ENCODE measurements at regions of chr1 and their contacts with region 1.

Region 1: DNA sequence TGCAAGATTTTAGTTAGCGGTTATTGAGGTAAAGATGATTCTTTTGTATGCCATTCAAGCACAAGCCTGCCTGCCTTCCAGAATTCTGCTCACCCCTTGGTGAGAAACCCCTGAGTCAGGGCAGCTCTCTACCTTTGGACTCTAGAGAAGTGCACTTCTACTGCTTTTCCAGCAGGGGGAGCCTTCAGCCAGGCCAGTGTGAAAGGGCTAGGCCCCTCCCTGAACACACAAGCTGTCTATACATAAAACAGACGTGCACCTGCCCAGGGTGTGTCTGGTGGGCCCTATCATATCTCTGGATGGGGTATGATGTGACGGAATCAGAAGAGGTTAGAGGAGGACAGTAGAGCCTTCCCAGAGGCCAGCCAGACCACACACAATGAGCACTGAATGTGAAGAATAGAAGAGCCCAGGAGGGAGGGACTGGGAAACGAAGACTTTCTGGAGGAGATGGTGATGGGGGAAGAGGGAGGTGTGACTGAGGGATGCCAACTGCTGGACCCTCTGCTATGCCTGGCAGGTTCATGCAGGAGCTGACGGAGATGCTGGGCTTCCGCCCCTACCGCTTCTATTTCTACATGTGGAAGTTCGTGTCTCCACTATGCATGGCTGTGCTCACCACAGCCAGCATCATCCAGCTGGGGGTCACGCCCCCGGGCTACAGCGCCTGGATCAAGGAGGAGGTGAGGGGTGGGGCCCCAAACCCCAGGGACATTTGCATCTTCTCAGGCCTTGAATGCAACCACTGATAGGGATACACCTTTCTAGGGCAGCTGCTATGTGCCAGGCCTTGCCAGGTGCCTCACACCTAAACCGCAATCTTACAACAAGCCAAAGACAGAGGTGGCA is 13.0 kb upstream of the KCNC4 start:
- DNase-seq: peak; percentile 28 to 47 (median 38)
- ATAC-seq: peak; percentile 81
- H3K4me3 ChIP-seq: no peak overlapping the region
- H3K27ac ChIP-seq: no peak overlapping the region
- H3K4me1 ChIP-seq: no peaks in the 10 kb centered on the region
- H3K27me3 ChIP-seq: no peaks in the 10 kb centered on the region
- CTCF ChIP-seq: peak; percentile 72 to 89 (median 78)
- POLR2A ChIP-seq: no peak

Region 2: GRCh38 chr1:110292031-110292741 is 95.0 kb after region 1 on chr1:
- intact Hi-C with region 1: no loop called
- DNase-seq: no peak
- ATAC-seq: no peak
- H3K4me3 ChIP-seq: no peak overlapping the region
- H3K27ac ChIP-seq: no peak overlapping the region
- H3K4me1 ChIP-seq: no peaks in the 10 kb centered on the region
- H3K27me3 ChIP-seq: no peaks in the 10 kb centered on the region
- CTCF ChIP-seq: no peak
- POLR2A ChIP-seq: no peak

Region 3: GRCh38 chr1:110460253-110461220 is 263.4 kb after region 1 on chr1:
- intact Hi-C with region 1: loop called (anchors 5 kb)
- DNase-seq: peak; percentile 82 to 88 (median 85)
- ATAC-seq: peak; percentile 75
- H3K4me3 ChIP-seq: no peak overlapping the region
- H3K27ac ChIP-seq: no peak overlapping the region
- H3K4me1 ChIP-seq: peaks cover 22% of the 10 kb centered on the region
- H3K27me3 ChIP-seq: no peaks in the 10 kb centered on the region
- CTCF ChIP-seq: peak; percentile 82 to 98 (median 97)
- POLR2A ChIP-seq: no peak

Measured in body of pancreas (tissue), 4 donors.